ENCODE measurements at regions of chr1 and their contacts with region 1.

Region 1: DNA sequence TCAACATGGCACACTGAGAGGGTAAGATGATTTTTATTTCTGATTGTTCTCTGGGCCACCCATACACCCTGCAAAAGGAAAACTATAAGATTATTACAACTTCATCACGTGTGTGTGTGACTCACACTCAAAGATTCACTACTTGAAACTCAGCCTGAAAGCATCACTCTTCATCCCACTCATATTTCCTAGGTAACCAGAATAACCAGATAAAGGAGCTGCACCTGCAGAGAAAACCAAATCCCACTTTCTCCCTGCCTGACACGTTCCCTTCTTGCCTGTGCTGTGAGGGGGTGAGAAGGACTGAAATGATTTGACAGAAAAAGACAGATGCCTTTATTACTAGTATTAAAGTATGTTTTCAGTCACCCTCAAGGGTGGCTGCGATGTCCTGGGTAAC is 131.6 kb downstream of the TGFBR3 start:
- DNase-seq: peak; percentile 75
- ATAC-seq: peak; percentile 87
- H3K4me3 Mint-ChIP-seq: peak overlapping the region; percentile 21
- H3K27ac Mint-ChIP-seq: peak overlapping the region; percentile 82
- H3K4me1 Mint-ChIP-seq: peaks cover 43% of the 10 kb centered on the region
- H3K27me3 Mint-ChIP-seq: peaks cover 7% of the 10 kb centered on the region

Region 2: DNA sequence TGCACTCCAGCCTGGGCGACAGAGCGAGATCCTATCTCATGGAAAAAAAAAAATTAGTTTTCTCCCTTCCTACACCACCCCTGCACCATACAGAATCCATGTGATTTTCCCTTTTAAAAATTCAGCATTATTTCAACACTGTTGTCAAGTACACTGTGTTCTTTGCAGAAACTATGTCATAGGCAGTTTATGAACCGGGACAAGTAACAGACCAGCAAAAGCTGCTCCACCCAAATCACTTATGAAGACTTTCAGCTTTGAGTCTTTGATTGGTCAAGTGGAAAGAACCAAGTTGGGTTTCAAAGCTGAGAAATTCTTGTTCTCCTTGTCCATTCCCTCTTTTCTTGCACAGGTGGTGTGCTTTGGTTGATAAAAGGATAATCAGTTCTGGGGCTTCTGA is 80.7 kb before region 1 on chr1:
- CTCF ChIA-PET with region 1: no interaction called
- POLR2A ChIA-PET with region 1: interaction called, 4 read pairs
- intact Hi-C with region 1: loop called (anchors 1 kb)
- DNase-seq: no peak
- ATAC-seq: no peak
- H3K4me3 Mint-ChIP-seq: no peak overlapping the region
- H3K27ac Mint-ChIP-seq: peak overlapping the region; percentile 84
- H3K4me1 Mint-ChIP-seq: peaks cover 34% of the 10 kb centered on the region
- H3K27me3 Mint-ChIP-seq: no peaks in the 10 kb centered on the region

Region 3: DNA sequence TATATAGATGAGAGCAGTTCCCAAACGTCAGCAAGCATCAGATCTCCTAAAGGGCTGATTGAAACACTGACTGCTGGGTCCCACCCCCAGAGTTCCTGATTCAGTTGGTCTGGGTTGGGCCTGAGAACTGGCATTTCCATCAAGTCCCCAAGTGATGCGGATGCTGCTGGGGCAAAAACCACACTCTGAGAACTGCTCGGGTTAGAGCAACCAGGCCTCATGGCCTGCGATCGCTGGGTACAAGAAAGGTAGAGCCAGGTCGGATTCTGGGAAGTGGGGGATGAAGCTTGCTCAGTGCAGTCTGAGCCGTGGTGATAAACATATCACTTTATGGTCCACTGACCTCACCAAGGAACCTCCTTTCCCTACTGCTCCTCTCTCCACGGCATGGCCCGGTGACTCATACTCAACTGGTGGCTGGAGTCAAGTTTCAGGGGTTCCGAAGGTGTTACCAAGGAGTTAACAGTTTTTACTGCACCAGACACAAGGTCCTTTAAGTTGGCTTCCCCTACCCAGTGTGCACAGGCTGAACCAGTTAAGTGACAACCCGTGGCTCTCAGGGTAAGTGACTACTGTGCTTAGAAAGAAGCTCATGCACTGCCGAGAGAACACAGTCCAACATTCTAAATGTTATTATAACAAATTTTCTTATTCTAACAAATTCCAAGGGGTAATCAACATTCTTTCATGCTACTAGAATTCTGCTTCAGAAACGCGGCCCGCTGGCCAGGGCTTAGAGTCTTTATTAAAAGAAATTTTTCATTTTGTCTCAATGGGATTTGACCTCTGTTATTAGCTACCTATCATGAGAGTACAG is 21.8 kb before region 1 on chr1:
- CTCF ChIA-PET with region 1: interaction called, 5 read pairs
- POLR2A ChIA-PET with region 1: interaction called, 12 read pairs
- intact Hi-C with region 1: loop called (anchors 1 kb)
- DNase-seq: peak; percentile 58
- ATAC-seq: peak; percentile 47
- H3K4me3 Mint-ChIP-seq: no peak overlapping the region
- H3K27ac Mint-ChIP-seq: peak overlapping the region; percentile 89
- H3K4me1 Mint-ChIP-seq: peaks cover 48% of the 10 kb centered on the region
- H3K27me3 Mint-ChIP-seq: peaks cover 5% of the 10 kb centered on the region

Region 4: GRCh38 chr1:92583821-92584760 is 829.7 kb after region 1 on chr1:
- CTCF ChIA-PET with region 1: no interaction called
- POLR2A ChIA-PET with region 1: no interaction called
- intact Hi-C with region 1: loop called in 1 of 2 experiments (anchors 1 kb)
- DNase-seq: no peak
- ATAC-seq: peak; percentile 60
- H3K4me3 Mint-ChIP-seq: peak overlapping the region; percentile 68
- H3K27ac Mint-ChIP-seq: peak overlapping the region; percentile 92
- H3K4me1 Mint-ChIP-seq: peaks cover 79% of the 10 kb centered on the region
- H3K27me3 Mint-ChIP-seq: no peaks in the 10 kb centered on the region